H1 (cell line): ENCODE measurements at regions of chr1 and their contacts with region 1.

Region 1: DNA sequence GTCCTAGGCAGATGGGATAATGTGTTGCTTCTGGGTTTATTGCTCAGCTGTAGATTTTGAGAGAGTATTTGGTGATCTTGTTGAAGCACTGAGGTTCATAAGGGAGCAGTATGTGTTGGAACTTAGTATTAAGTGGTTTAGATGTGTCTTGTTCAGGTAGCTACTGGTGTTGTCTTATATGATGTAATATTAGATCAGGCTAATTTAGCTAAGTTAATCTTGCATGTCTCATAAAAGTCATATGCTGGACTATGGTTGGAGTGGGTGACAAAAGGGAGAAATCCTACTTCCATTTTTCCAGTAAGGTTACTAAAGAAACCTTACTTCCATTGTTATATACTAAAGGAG is 196.4 kb downstream of the CLEC20A start:
- DNase-seq: no peak
- H3K4me3 ChIP-seq: no peak overlapping the region
- H3K27ac ChIP-seq: no peak overlapping the region
- H3K4me1 ChIP-seq: peaks cover 0 to 2% (median 0%) of the 10 kb centered on the region in 4 experiments; a peak in 3 of 7 replicates
- H3K27me3 ChIP-seq: no peaks in the 10 kb centered on the region
- CTCF ChIP-seq: no peak
- EP300 ChIP-seq: no peak
- POLR2A ChIP-seq: no peak
- RAD21 ChIP-seq: no peak

Region 2: DNA sequence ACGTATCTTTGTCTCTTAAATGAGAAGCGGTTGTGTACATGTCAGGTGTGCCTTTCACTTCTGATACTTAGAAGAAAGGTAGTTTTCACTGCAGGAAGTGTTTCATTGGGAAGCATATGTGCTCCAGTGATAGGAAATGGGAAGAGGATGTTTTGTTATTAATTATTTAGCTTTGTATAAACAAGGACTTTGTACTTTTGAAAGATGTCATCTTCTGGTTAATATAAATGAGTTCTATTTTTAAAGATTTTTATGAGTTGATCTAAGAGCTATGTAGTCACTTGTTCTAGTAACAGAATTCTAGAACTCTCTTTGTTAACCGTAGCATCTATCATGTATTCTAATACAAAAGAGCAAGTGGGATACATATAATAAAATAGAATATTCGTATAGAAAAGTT is 76.0 kb before region 1 on chr1:
- CTCF ChIA-PET with region 1: no interaction called
- POLR2A ChIA-PET with region 1: no interaction called
- DNase-seq: no peak
- H3K4me3 ChIP-seq: no peak overlapping the region
- H3K27ac ChIP-seq: no peak overlapping the region
- H3K4me1 ChIP-seq: peaks cover 0 to 4% (median 0%) of the 10 kb centered on the region in 4 experiments; a peak in 1 of 7 replicates
- H3K27me3 ChIP-seq: no peaks in the 10 kb centered on the region
- CTCF ChIP-seq: no peak
- EP300 ChIP-seq: no peak
- POLR2A ChIP-seq: no peak
- RAD21 ChIP-seq: no peak

Region 3: GRCh38 chr1:178241837-178242236 is 58.5 kb before region 1 on chr1:
- CTCF ChIA-PET with region 1: interaction called, 11 read pairs
- POLR2A ChIA-PET with region 1: no interaction called
- DNase-seq: no peak
- H3K4me3 ChIP-seq: no peak overlapping the region
- H3K27ac ChIP-seq: no peak overlapping the region
- H3K4me1 ChIP-seq: peaks cover 0 to 3% (median 0%) of the 10 kb centered on the region in 4 experiments; a peak in 1 of 7 replicates
- H3K27me3 ChIP-seq: no peaks in the 10 kb centered on the region
- CTCF ChIP-seq: no peak
- EP300 ChIP-seq: no peak
- POLR2A ChIP-seq: no peak
- RAD21 ChIP-seq: no peak

Region 4: GRCh38 chr1:178282949-178283367 is 17.4 kb before region 1 on chr1:
- CTCF ChIA-PET with region 1: interaction called, 13 read pairs
- POLR2A ChIA-PET with region 1: no interaction called
- DNase-seq: no peak
- H3K4me3 ChIP-seq: peak overlapping the region in 1 of 4 experiments; percentile 53; a peak in 2 of 8 replicates
- H3K27ac ChIP-seq: peak overlapping the region; percentile 58
- H3K4me1 ChIP-seq: peaks cover 9 to 23% (median 12%) of the 10 kb centered on the region in 4 experiments; a peak in 6 of 7 replicates
- H3K27me3 ChIP-seq: no peaks in the 10 kb centered on the region
- CTCF ChIP-seq: peak in 2 of 3 experiments; percentile 35 to 41; a peak in 2 of 4 replicates
- EP300 ChIP-seq: no peak
- POLR2A ChIP-seq: no peak
- RAD21 ChIP-seq: peak; percentile 54 to 56

Region 5: DNA sequence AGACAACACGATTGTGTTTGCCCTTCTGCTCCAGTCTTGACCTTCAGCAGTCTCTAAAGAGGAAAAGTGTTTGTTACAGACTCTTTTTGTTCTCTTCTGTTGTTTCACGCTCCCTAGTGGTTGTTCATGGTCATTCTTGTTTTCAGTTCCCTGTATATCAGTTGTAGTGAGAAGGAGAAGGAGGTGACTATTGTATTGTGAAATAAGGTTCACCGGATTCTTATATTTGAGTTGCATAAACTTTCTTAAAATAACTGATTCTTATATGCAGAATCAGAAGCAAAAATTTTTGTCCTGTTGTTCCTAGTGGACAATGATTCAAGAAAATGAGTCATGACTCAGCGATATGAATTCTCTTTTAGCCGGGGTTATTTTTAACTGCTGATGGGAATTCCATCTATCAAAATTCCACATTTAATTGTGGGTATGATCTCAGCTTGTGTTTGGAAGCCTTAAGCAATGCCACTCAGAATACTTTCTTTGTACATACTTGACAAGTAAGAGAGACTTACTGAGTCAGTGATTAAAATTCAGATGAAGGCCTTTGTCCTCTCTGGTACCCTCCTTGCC is 44.3 kb after region 1 on chr1:
- CTCF ChIA-PET with region 1: interaction called, 12 read pairs
- POLR2A ChIA-PET with region 1: no interaction called
- DNase-seq: no peak
- H3K4me3 ChIP-seq: no peak overlapping the region; a peak in 1 of 8 replicates
- H3K27ac ChIP-seq: no peak overlapping the region
- H3K4me1 ChIP-seq: peaks cover 0 to 17% (median 11%) of the 10 kb centered on the region in 4 experiments; a peak in 4 of 7 replicates
- H3K27me3 ChIP-seq: no peaks in the 10 kb centered on the region
- CTCF ChIP-seq: peak in 2 of 3 experiments; percentile 33 to 57; a peak in 2 of 4 replicates
- EP300 ChIP-seq: no peak
- POLR2A ChIP-seq: no peak
- RAD21 ChIP-seq: peak; percentile 47 to 55

Region 6: DNA sequence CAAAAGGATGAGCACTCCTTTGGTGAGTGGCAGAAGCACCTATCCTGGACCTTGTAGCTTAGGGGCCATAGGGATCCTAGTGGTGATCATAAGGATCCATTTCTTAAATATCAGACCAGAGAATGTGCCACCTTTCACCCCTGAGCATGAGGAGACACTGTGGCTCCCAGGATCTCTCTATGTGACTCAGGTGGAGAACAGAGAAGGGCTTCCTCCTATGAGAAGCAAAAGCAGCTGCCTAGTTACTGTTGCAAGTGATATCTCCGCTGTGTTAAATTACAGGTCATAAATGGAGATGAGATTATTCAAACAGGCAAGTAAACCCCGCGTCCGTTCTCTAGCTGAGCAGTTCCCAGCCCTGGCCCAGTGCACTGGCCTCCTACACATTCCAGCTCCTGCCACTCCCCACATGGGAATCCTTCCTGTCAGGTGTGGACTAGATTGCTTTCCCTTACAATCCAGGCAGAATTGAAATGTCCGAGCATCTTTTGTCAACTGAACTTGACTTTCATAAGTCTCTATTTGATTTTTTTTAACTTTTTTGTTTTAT is 170.2 kb after region 1 on chr1:
- CTCF ChIA-PET with region 1: interaction called, 10 read pairs
- POLR2A ChIA-PET with region 1: no interaction called
- DNase-seq: no peak
- H3K4me3 ChIP-seq: no peak overlapping the region
- H3K27ac ChIP-seq: no peak overlapping the region
- H3K4me1 ChIP-seq: no peaks in the 10 kb centered on the region
- H3K27me3 ChIP-seq: no peaks in the 10 kb centered on the region
- CTCF ChIP-seq: no peak
- EP300 ChIP-seq: no peak
- POLR2A ChIP-seq: no peak
- RAD21 ChIP-seq: no peak